ENCODE measurements at regions of chr5 and their contacts with region 1.

Region 1: DNA sequence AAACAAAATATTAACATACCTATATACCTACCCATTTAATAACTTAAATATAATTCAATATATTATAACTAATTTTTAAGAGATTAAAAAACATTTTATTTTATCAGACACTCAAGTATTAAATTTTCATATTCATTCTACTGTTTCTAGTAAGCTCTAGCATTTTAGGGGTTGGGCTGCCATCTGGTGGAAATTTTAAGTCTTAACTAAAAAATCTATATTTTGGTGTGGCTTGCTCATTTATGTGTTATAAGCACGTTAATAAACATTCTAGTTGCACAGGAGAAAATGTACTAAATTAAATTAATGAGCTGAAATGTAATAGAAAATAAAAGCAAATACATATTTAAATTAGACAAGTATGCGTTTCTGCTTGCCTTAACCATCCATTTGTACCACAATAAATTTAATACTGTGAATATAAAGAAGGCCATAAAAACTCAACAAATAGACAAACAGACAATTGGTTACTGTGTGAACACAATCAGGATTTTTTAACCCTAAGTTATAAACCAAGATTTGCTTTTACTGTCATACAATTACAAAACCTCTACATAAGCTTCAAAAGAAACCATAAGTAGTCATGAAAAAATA is 1728.3 kb upstream of the CDH9 start:
- DNase-seq: peak; percentile 6
- H3K4me3 Mint-ChIP-seq: no peak overlapping the region
- H3K27ac Mint-ChIP-seq: no peak overlapping the region
- H3K4me1 Mint-ChIP-seq: no peaks in the 10 kb centered on the region
- H3K27me3 Mint-ChIP-seq: no peaks in the 10 kb centered on the region

Region 2: GRCh38 chr5:28344803-28345433 is 421.7 kb before region 1 on chr5:
- CTCF ChIA-PET with region 1: no interaction called
- intact Hi-C with region 1: loop called (anchors 5 kb)
- DNase-seq: no peak
- H3K4me3 Mint-ChIP-seq: no peak overlapping the region
- H3K27ac Mint-ChIP-seq: no peak overlapping the region
- H3K4me1 Mint-ChIP-seq: no peaks in the 10 kb centered on the region
- H3K27me3 Mint-ChIP-seq: no peaks in the 10 kb centered on the region

Region 3: GRCh38 chr5:28945859-28946258 is 179.2 kb after region 1 on chr5:
- CTCF ChIA-PET with region 1: no interaction called
- intact Hi-C with region 1: no loop called
- DNase-seq: no peak
- H3K4me3 Mint-ChIP-seq: no peak overlapping the region
- H3K27ac Mint-ChIP-seq: no peak overlapping the region
- H3K4me1 Mint-ChIP-seq: no peaks in the 10 kb centered on the region
- H3K27me3 Mint-ChIP-seq: no peaks in the 10 kb centered on the region

Measured in activated naive CD4-positive, alpha-beta T cell treated with anti-CD3 and anti-CD28 coated beads for 36 hours (primary cell).